H1 (cell line): ENCODE measurements at regions of chr9 and their contacts with region 1.

Region 1: GRCh38 chr9:113602126-113603044 is 138.9 kb downstream of the RGS3 start:
- DNase-seq: peak; percentile 59 to 87
- H3K4me3 ChIP-seq: no peak overlapping the region; a peak in 1 of 8 replicates
- H3K27ac ChIP-seq: peak overlapping the region; percentile 39; the same call in 1 of the 2 replicates
- H3K4me1 ChIP-seq: peaks cover 0 to 17% (median 12%) of the 10 kb centered on the region in 4 experiments; a peak in 6 of 7 replicates
- H3K27me3 ChIP-seq: no peaks in the 10 kb centered on the region
- CTCF ChIP-seq: no peak
- EP300 ChIP-seq: no peak
- POLR2A ChIP-seq: 0 out of 3 replicates have a peak, but pooled peaks of 1 of the 2 experiments have one; percentile 43
- RAD21 ChIP-seq: no peak

Region 2: GRCh38 chr9:113614843-113615648 is 12.7 kb after region 1 on chr9:
- CTCF ChIA-PET with region 1: interaction called, 28 read pairs
- POLR2A ChIA-PET with region 1: interaction called, 13 read pairs
- DNase-seq: no peak
- H3K4me3 ChIP-seq: no peak overlapping the region
- H3K27ac ChIP-seq: no peak overlapping the region
- H3K4me1 ChIP-seq: peaks cover 8 to 18% (median 10%) of the 10 kb centered on the region in 4 experiments
- H3K27me3 ChIP-seq: no peaks in the 10 kb centered on the region; a peak in 2 of 7 replicates
- CTCF ChIP-seq: no peak
- EP300 ChIP-seq: no peak
- POLR2A ChIP-seq: no peak
- RAD21 ChIP-seq: no peak

Region 3: GRCh38 chr9:113648586-113649453 is 46.4 kb after region 1 on chr9:
- CTCF ChIA-PET with region 1: interaction called, 1,065 read pairs
- POLR2A ChIA-PET with region 1: interaction called, 10 read pairs
- DNase-seq: no peak
- H3K4me3 ChIP-seq: no peak overlapping the region
- H3K27ac ChIP-seq: no peak overlapping the region
- H3K4me1 ChIP-seq: peaks cover 0 to 15% (median 6%) of the 10 kb centered on the region in 4 experiments; a peak in 4 of 7 replicates
- H3K27me3 ChIP-seq: peaks cover 12 to 41% (median 32%) of the 10 kb centered on the region in 4 experiments
- CTCF ChIP-seq: no peak
- EP300 ChIP-seq: no peak
- POLR2A ChIP-seq: no peak
- RAD21 ChIP-seq: no peak

Region 4: GRCh38 chr9:113695901-113696300 is 93.5 kb after region 1 on chr9:
- CTCF ChIA-PET with region 1: no interaction called
- POLR2A ChIA-PET with region 1: no interaction called
- DNase-seq: no peak
- H3K4me3 ChIP-seq: no peak overlapping the region
- H3K27ac ChIP-seq: no peak overlapping the region
- H3K4me1 ChIP-seq: no peaks in the 10 kb centered on the region
- H3K27me3 ChIP-seq: no peaks in the 10 kb centered on the region; a peak in 1 of 7 replicates
- CTCF ChIP-seq: no peak
- EP300 ChIP-seq: no peak
- POLR2A ChIP-seq: no peak
- RAD21 ChIP-seq: no peak

Region 5: DNA sequence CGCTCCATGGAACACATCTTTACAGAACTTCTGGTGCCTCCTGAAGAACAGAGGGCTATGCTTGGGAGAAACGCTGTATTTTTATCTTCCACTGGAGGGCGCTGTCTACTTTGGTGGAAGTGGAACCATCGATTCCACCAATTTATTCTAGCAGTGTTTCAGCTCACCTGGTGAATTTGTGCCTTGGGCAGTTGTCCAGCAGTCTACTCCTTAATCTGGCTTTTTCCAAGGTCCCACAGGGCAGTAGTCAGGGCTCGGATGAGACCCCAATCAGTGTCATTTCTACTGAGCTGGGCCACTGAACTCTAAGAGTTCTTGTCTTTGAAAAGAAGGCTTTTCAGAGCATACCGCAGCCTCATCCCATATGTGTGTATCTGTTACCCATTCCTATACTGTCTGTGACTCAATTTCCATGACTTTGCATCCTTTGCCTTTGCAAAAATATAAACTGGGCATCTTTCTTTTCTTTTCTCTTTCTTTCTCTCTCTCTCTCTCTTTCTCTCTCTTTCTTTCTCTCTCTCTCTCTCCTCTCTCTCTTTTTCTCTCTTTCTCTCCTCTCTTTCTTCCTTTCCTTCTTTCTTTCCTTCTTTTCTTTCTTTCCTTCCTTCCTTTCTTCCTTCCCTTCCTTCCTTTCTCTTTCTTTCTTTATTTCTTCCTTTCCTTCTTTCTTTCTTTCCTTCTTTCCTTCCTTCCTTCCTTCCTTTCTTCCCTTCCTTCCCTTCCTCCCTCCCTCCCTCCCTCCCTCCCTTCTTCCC is 135.3 kb after region 1 on chr9:
- CTCF ChIA-PET with region 1: no interaction called
- POLR2A ChIA-PET with region 1: no interaction called
- DNase-seq: peak in 1 of 2 experiments; percentile 85
- H3K4me3 ChIP-seq: no peak overlapping the region
- H3K27ac ChIP-seq: no peak overlapping the region
- H3K4me1 ChIP-seq: peaks cover 0 to 11% (median 4%) of the 10 kb centered on the region in 4 experiments; a peak in 5 of 7 replicates
- H3K27me3 ChIP-seq: no peaks in the 10 kb centered on the region
- CTCF ChIP-seq: peak in 2 of 3 experiments; percentile 85 to 89; a peak in 3 of 4 replicates
- EP300 ChIP-seq: no peak
- POLR2A ChIP-seq: no peak
- RAD21 ChIP-seq: peak; percentile 93 to 96